ENCODE measurements at regions of chr3 and their contacts with region 1.

Region 1: GRCh38 chr3:7436542-7436941 is 575.6 kb downstream of the GRM7 start:
- DNase-seq: no peak

Region 2: GRCh38 chr3:7421065-7421464 is 15.5 kb before region 1 on chr3:
- intact Hi-C with region 1: loop called in 1 of 2 experiments (anchors 1 kb)
- DNase-seq: no peak

Measured in posterior vena cava (tissue), 2 donors.